ENCODE measurements at regions of chr19 and their contacts with region 1.

Region 1: GRCh38 chr19:49570138-49570856 is 10.1 kb downstream of the NOSIP start:
- DNase-seq: peak in 1 of 2 donors; percentile 54
- ATAC-seq: peak; percentile 67 to 73
- H3K4me3 ChIP-seq: no peak overlapping the region
- H3K27ac ChIP-seq: peak overlapping the region; percentile 69 to 85 (median 75)
- H3K4me1 ChIP-seq: peaks cover 39 to 57% of the 10 kb centered on the region in 2 donors
- H3K27me3 ChIP-seq: no peaks in the 10 kb centered on the region
- CTCF ChIP-seq: peak; percentile 92 to 99 (median 98)
- POLR2A ChIP-seq: no peak

Region 2: GRCh38 chr19:49421039-49421877 is 149.0 kb before region 1 on chr19:
- in situ Hi-C with region 1: no loop called
- intact Hi-C with region 1: no loop called
- DNase-seq: no peak
- ATAC-seq: no peak
- H3K4me3 ChIP-seq: peak overlapping the region in 1 of 4 donors; percentile 10
- H3K27ac ChIP-seq: no peak overlapping the region
- H3K4me1 ChIP-seq: peaks cover 13 to 21% of the 10 kb centered on the region in 2 donors
- H3K27me3 ChIP-seq: peaks cover 80 to 95% (median 86%) of the 10 kb centered on the region in 3 donors
- CTCF ChIP-seq: no peak
- POLR2A ChIP-seq: no peak

Region 3: GRCh38 chr19:49497047-49497788 is 73.1 kb before region 1 on chr19:
- in situ Hi-C with region 1: loop called in 1 of 4 experiments (anchors 5 kb)
- intact Hi-C with region 1: no loop called
- DNase-seq: peak; percentile 48 to 63
- ATAC-seq: no peak
- H3K4me3 ChIP-seq: peak overlapping the region; percentile 79 to 96 (median 90)
- H3K27ac ChIP-seq: peak overlapping the region; percentile 93 to 98 (median 96)
- H3K4me1 ChIP-seq: peaks cover 27 to 31% of the 10 kb centered on the region in 2 donors
- H3K27me3 ChIP-seq: no peaks in the 10 kb centered on the region
- CTCF ChIP-seq: no peak
- POLR2A ChIP-seq: peak; percentile 24 to 62

Region 4: DNA sequence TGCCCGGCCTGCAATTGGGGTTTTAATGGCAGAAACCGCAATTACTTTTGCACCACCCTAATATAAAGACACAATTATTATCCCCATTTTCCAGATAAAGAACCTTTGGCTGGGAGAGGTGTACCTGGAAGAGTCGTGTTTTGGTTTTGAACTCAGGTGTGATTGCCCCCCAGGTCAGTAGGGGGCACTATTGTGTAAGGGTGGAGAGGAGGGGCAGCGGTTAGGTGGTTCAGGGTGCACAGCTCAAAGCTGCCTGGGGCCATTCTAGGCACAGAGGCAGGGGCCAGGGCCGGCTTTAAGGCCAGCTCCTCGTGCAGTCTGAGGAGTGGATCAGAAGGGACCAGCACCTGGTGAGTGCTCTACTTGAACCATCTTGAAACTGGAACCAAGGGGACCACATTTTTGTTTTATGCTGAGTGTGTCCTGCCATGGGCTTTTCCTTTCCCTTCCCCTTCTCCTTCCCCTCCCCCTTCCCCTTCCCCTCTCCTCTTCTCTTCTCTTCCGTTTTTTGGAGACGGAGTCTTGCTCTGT is 63.7 kb before region 1 on chr19:
- in situ Hi-C with region 1: no loop called
- intact Hi-C with region 1: loop called (anchors 1 kb)
- DNase-seq: peak in 1 of 2 donors; percentile 50
- ATAC-seq: peak; percentile 25 to 71
- H3K4me3 ChIP-seq: no peak overlapping the region
- H3K27ac ChIP-seq: no peak overlapping the region
- H3K4me1 ChIP-seq: peaks cover 5 to 7% of the 10 kb centered on the region in 2 donors
- H3K27me3 ChIP-seq: no peaks in the 10 kb centered on the region
- CTCF ChIP-seq: peak; percentile 72 to 93 (median 81)
- POLR2A ChIP-seq: no peak

Region 5: GRCh38 chr19:49546825-49547565 is 23.3 kb before region 1 on chr19:
- in situ Hi-C with region 1: no loop called
- intact Hi-C with region 1: loop called (anchors 2 kb)
- DNase-seq: peak; percentile 62
- ATAC-seq: peak; percentile 93 to 97
- H3K4me3 ChIP-seq: peak overlapping the region in 2 of 4 donors; percentile 12 to 30
- H3K27ac ChIP-seq: peak overlapping the region in 1 of 4 donors; percentile 18
- H3K4me1 ChIP-seq: peaks cover 0 to 5% of the 10 kb centered on the region in 2 donors
- H3K27me3 ChIP-seq: no peaks in the 10 kb centered on the region
- CTCF ChIP-seq: peak; percentile 78 to 89 (median 88)
- POLR2A ChIP-seq: no peak

Region 6: DNA sequence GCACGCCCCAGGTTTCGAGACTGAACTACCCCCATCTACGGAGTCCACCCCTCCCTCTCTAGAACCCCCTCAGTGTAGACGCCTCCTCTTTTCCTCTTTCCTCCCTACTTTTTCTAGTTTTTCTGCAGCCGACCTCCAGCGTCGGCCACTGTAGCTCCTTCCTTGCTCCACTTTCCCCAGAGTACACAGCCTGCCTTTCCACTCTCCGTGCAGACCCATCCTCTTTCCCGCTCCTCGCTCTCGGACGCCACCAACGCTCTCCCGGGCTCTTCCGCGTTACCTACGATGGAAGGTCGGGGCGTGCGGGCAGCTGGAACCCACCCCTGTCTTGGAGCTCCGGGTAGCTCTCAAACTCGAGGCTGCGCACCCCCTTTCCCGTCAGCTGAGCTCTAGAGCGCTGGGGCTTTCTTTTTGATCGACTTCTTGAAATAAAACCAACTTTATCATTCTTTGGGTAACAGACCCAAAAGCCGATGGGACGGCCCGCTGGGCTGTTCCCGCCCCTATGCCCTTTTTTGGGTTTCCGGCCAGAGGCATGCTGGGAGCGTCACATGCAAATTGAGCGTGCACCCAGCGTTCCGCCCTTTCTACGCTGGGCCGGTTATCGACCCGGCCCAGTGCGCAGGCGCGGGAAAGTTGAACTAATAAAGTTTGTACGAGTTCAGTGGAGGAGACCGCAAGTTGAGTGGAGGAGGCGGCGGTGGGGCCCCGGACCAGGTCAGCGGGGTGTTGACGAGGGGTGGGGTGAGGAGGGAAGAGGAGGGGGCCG is 95.2 kb after region 1 on chr19 and contains the starts of genes BCL2L12 and IRF3:
- in situ Hi-C with region 1: loop called in 2 of 4 experiments (anchors 10 kb)
- intact Hi-C with region 1: no loop called
- DNase-seq: peak; percentile 94 to 96
- ATAC-seq: peak; percentile 95 to 96
- H3K4me3 ChIP-seq: peak within 1 kb of the TSS; percentile 70 to 81 (median 72)
- H3K27ac ChIP-seq: peak within 1 kb of the TSS; percentile 81 to 88 (median 87)
- H3K4me1 ChIP-seq: peaks cover 16 to 23% of the 10 kb centered on the region in 2 donors
- H3K27me3 ChIP-seq: no peaks in the 10 kb centered on the region
- CTCF ChIP-seq: no peak
- POLR2A ChIP-seq: peak; percentile 72 to 77
- total RNA-seq, gene BCL2L12: 10.7 to 12.9 (median 11.8) TPM
- total RNA-seq, gene IRF3: 11.0 to 18.6 (median 13.7) TPM